Activated T-helper 1 cell treated with anti-CD3 and anti-CD28 coated beads, Interleukin-12 subunit alpha, Interleukin-12 subunit beta, Interleukin-2, Interleukin-4 antibody, amounts not matched to agents 30 ng/mL and 10 ng/mL and 1 ng/mL, durations not matched to agents 14 hours and 24 hours and 36 hours (primary cell): ENCODE measurements at regions of chr17 and their contacts with region 1.

Region 1: DNA sequence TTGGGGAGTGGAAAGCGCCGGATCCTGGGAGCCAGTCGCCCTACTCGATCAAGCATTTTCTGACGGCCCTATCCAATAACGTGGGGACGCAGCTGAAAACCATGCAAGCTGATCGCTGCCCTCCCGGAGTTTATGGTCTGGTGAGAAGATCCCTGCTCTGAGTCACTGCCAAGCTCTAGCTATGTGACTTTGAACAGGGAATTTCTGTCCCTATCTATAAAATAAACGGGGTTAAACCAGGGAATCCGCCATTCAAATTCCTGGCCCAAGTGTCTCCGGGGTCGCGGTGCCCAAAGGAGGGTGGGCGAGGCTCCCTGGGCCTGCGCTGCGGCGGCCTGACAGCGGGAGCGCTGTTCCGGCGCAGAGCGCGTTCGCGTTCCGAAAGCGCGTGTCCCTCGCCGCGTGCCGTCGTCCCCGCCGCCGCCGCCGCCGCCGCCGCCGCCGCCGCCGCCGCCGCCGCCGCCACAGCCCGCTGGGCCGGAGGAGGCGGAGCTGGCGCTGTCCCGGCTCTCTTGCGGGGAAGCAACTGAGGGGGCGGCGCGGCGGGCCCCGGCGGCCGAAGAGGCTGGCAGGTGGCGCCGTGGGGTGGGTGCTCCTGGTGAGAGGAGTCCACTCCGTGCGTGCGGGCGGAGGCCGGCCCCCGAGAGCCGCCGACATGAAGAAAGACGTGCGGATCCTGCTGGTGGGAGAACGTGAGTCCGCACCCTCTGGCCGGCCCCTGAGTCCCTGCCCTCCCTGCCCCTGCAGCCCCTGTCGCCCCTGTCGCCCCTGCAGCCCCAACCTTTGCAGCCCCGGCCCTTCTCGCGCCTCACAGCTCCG is at the start of gene RHOT1:
- DNase-seq: peak; percentile 76
- H3K4me3 Mint-ChIP-seq: peak within 1 kb of the TSS; percentile 96
- H3K27ac Mint-ChIP-seq: peak within 1 kb of the TSS; percentile 92
- H3K4me1 Mint-ChIP-seq: peaks cover 25% of the 10 kb centered on the region
- H3K27me3 Mint-ChIP-seq: no peaks in the 10 kb centered on the region
- total RNA-seq, gene RHOT1: 25.9 and 27.2 TPM in 2 replicates

Region 2: GRCh38 chr17:32033223-32033622 is 109.0 kb before region 1 on chr17:
- intact Hi-C with region 1: no loop called
- DNase-seq: no peak
- H3K4me3 Mint-ChIP-seq: no peak overlapping the region
- H3K27ac Mint-ChIP-seq: no peak overlapping the region
- H3K4me1 Mint-ChIP-seq: no peaks in the 10 kb centered on the region
- H3K27me3 Mint-ChIP-seq: no peaks in the 10 kb centered on the region

Region 3: DNA sequence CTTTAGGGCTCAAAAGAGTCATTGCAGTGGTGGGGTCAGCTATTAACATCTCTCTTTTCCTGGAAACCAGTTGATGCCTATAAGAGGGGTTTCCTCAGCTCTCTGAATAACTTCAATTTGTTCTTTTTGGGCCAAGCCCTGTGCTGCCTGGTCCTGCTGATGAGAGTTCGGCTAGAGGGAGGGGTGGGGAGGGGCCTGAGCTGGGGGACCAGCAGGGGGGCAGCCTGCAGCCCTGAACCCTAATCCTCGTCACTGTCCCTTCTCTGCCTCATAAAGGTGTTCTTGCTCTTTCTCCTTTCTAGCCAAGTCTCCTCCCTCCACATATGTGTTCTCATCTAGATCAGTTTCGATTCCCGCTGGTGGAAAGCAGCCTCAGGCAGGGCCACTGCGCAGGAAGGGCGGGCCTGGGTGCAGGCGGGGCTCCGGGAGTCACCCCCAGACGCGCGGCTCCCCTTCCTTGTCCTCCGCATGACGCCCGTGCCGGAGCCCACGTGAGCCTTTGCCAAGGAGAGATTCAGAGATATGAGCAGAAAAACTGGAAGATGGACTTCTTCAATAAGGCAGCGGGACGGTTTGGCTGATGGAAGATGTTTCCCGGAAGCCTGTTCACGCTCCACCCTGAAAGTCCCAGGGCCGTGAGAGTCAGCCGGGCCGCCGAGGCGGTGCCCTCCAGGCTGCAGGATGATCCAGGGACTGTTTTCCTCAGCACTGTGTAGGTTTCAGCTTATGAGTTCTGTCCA is 14.9 kb before region 1 on chr17:
- intact Hi-C with region 1: loop called (anchors 1 kb)
- DNase-seq: peak; percentile 85
- H3K4me3 Mint-ChIP-seq: peak overlapping the region; percentile 93
- H3K27ac Mint-ChIP-seq: peak overlapping the region; percentile 91
- H3K4me1 Mint-ChIP-seq: peaks cover 25% of the 10 kb centered on the region
- H3K27me3 Mint-ChIP-seq: peaks cover 2% of the 10 kb centered on the region

Region 4: GRCh38 chr17:32166150-32166549 is 23.9 kb after region 1 on chr17:
- intact Hi-C with region 1: no loop called
- DNase-seq: no peak
- H3K4me3 Mint-ChIP-seq: no peak overlapping the region
- H3K27ac Mint-ChIP-seq: no peak overlapping the region
- H3K4me1 Mint-ChIP-seq: no peaks in the 10 kb centered on the region
- H3K27me3 Mint-ChIP-seq: no peaks in the 10 kb centered on the region